Activated B cell treated with CpG ODN at 0.5 μM for 24 hours (primary cell): ENCODE measurements at regions of chr7 and their contacts with region 1.

Region 1: GRCh38 chr7:139054101-139054500 is 18.3 kb upstream of the ZC3HAV1L start:
- DNase-seq: no peak
- ATAC-seq: no peak
- H3K4me3 Mint-ChIP-seq: no peak overlapping the region
- H3K27ac Mint-ChIP-seq: no peak overlapping the region
- H3K4me1 Mint-ChIP-seq: peaks cover 2% of the 10 kb centered on the region
- H3K27me3 Mint-ChIP-seq: no peaks in the 10 kb centered on the region
- CTCF ChIP-seq: no peak

Region 2: GRCh38 chr7:139035586-139036353 is 18.3 kb before region 1 on chr7 and contains the start of gene ZC3HAV1L:
- CTCF ChIA-PET with region 1: no interaction called
- POLR2A ChIA-PET with region 1: no interaction called
- intact Hi-C with region 1: no loop called
- DNase-seq: peak; percentile 34
- ATAC-seq: peak; percentile 73
- H3K4me3 Mint-ChIP-seq: peak within 1 kb of the TSS; percentile 81
- H3K27ac Mint-ChIP-seq: no peak within 1 kb of the TSS
- H3K4me1 Mint-ChIP-seq: peaks cover 10% of the 10 kb centered on the region
- H3K27me3 Mint-ChIP-seq: no peaks in the 10 kb centered on the region
- CTCF ChIP-seq: no peak
- total RNA-seq, gene ZC3HAV1L: 1.6 and 1.8 TPM in 2 replicates

Region 3: GRCh38 chr7:139086454-139086853 is 32.4 kb after region 1 on chr7:
- CTCF ChIA-PET with region 1: no interaction called
- POLR2A ChIA-PET with region 1: interaction called, 10 read pairs
- intact Hi-C with region 1: no loop called
- DNase-seq: no peak
- ATAC-seq: no peak
- H3K4me3 Mint-ChIP-seq: no peak overlapping the region
- H3K27ac Mint-ChIP-seq: peak overlapping the region; percentile 3
- H3K4me1 Mint-ChIP-seq: peaks cover 29% of the 10 kb centered on the region
- H3K27me3 Mint-ChIP-seq: no peaks in the 10 kb centered on the region
- CTCF ChIP-seq: no peak

Region 4: DNA sequence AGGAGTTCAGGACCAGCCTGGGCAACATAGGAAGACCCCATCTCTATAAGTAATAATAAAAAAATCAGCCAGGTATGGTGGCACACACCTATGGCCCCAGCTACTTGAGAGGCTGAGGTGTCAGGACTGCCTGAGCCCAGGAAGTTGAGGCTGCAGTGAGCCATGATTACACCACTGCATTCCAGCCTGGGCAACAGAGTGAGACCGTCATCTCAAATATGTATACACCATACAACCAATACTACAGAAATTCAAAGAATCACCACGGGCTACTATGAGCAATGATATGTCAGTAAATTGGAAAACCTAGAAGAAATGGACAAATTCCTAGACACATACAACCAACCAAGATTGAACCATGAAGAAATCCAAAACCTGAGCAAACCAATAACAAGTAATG is 115.7 kb after region 1 on chr7:
- CTCF ChIA-PET with region 1: no interaction called
- POLR2A ChIA-PET with region 1: no interaction called
- intact Hi-C with region 1: no loop called
- DNase-seq: no peak
- ATAC-seq: no peak
- H3K4me3 Mint-ChIP-seq: no peak overlapping the region
- H3K27ac Mint-ChIP-seq: no peak overlapping the region
- H3K4me1 Mint-ChIP-seq: no peaks in the 10 kb centered on the region
- H3K27me3 Mint-ChIP-seq: no peaks in the 10 kb centered on the region
- CTCF ChIP-seq: no peak